ENCODE measurements at regions of chr6 and their contacts with region 1.

Region 1: DNA sequence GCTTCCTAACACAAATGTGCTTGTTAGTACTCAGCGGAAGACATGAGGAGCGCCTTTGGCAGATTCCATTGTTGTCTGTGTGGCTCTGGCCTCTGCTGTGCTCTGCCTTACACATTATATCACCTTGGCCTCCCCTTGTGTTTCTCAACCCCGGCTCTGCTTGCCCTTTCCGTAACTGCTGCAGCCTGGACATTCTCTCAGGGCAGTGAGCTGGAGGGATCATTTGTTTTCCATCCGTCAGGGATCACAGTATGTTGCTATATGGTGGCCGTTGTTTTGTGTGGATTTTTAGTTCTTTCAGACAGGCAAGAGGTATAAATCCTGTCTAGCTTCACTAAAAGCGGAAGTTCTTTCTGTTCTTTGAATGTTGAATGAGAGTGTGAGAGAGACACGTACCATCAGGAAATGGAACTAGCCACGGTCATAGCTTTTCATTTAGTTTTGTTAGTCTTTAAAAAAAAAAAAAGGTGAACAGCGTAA is 175.1 kb downstream of the JARID2 start:
- DNase-seq: no peak
- ATAC-seq: peak; percentile 61
- H3K4me3 Mint-ChIP-seq: peak overlapping the region; percentile 37
- H3K27ac Mint-ChIP-seq: peak overlapping the region; percentile 90
- H3K4me1 Mint-ChIP-seq: peaks cover 56% of the 10 kb centered on the region
- H3K27me3 Mint-ChIP-seq: no peaks in the 10 kb centered on the region

Region 2: DNA sequence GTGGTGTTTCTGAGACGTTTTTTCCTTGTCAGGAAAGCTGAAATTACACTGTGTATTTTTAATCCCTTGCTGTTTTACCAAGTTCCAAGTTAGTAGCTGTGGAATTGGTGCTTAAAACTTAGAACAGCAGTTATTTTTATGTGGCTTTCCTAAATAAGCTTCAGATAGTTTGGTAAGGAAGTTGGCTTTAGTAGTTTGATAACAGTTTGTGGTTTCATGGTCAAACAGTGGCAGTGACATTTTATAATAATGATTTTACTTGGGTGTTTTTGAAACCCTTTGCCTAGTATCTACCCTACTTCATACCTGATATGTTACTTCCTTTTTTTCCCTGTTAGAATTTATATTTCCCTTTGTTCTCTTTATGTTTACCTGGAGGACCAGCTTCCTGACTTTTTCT is 10.2 kb before region 1 on chr6:
- CTCF ChIA-PET with region 1: interaction called, 16 read pairs
- DNase-seq: no peak
- ATAC-seq: no peak
- H3K4me3 Mint-ChIP-seq: peak overlapping the region; percentile 30
- H3K27ac Mint-ChIP-seq: peak overlapping the region; percentile 90
- H3K4me1 Mint-ChIP-seq: peaks cover 58% of the 10 kb centered on the region
- H3K27me3 Mint-ChIP-seq: no peaks in the 10 kb centered on the region

Region 3: GRCh38 chr6:15431762-15432483 is 10.9 kb after region 1 on chr6:
- CTCF ChIA-PET with region 1: interaction called, 21 read pairs
- DNase-seq: no peak
- ATAC-seq: no peak
- H3K4me3 Mint-ChIP-seq: no peak overlapping the region
- H3K27ac Mint-ChIP-seq: peak overlapping the region; percentile 53
- H3K4me1 Mint-ChIP-seq: peaks cover 76% of the 10 kb centered on the region
- H3K27me3 Mint-ChIP-seq: no peaks in the 10 kb centered on the region

Region 4: DNA sequence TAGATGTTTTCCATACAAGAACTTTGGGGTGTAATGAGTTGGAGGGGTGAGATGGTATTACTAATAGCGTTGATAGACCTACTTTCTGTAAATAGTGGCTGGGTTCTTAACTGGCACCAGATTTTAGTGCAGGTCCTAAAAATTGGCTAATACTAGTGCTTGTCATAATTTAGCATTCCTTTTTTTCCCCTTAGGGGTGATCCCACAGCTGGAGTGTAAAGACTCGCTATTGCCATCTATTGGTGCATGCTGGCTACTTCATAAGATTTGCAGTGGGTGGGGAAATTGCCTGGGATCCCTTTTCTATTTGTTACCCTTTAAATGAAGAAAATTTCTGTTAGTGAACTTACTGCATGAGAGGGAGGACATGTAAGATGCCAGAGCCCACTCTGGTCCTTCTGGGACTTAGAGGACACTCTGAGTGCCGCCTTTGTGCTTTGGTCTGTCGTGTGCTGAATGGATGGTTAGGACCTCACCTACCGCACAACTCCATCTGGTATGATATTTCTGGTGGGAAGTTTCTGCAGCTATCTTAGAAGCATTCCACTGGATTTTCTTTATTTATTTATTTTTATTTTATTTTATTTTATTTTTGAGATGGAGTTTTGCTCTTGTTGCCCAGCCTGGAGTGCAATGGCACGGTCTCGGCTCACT is 20.3 kb after region 1 on chr6:
- CTCF ChIA-PET with region 1: interaction called, 14 read pairs
- DNase-seq: no peak
- ATAC-seq: peak; percentile 37
- H3K4me3 Mint-ChIP-seq: no peak overlapping the region
- H3K27ac Mint-ChIP-seq: peak overlapping the region; percentile 31
- H3K4me1 Mint-ChIP-seq: peaks cover 76% of the 10 kb centered on the region
- H3K27me3 Mint-ChIP-seq: no peaks in the 10 kb centered on the region

Region 5: GRCh38 chr6:15464211-15464725 is 43.3 kb after region 1 on chr6:
- CTCF ChIA-PET with region 1: no interaction called
- DNase-seq: peak; percentile 73
- ATAC-seq: peak; percentile 73
- H3K4me3 Mint-ChIP-seq: no peak overlapping the region
- H3K27ac Mint-ChIP-seq: no peak overlapping the region
- H3K4me1 Mint-ChIP-seq: peaks cover 16% of the 10 kb centered on the region
- H3K27me3 Mint-ChIP-seq: no peaks in the 10 kb centered on the region

Region 6: DNA sequence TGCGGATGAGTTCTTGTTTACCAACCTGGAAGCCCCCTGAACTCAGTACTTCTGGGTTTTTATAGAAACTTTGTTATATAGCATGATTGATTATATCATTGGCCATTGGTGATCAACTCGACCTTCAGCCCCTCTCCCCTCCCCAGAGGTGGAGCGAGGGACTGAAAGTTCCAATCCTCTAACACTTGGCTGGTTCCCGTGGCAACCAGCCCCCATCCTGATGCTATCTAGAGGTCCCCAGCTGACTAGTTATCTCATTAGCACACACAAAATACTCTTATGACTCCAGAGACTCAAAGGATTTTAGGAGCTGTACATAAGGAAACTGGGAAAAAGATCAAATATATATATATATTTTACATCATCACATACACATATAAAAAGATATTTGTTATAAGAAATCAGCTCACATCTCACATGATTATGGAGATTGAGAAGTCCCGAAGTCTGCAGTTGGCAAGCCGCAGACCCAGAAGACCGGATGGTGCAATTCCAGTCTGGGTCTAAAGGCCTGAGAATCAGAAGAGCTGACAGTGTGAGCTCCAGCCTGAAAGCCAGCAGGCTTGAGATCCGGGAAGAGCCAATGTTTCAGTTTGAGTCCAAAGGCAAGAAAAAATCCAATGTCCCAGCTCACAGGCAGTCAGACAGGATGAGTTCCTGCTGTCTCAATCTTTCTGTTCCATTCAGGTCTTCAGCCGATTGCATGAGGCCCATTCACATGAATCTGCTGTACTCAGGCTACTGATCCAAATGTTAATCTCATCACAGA is 421.1 kb after region 1 on chr6:
- CTCF ChIA-PET with region 1: no interaction called
- DNase-seq: no peak
- ATAC-seq: no peak
- H3K4me3 Mint-ChIP-seq: no peak overlapping the region
- H3K27ac Mint-ChIP-seq: no peak overlapping the region
- H3K4me1 Mint-ChIP-seq: no peaks in the 10 kb centered on the region
- H3K27me3 Mint-ChIP-seq: peaks cover 2% of the 10 kb centered on the region

Measured in activated CD8-positive, alpha-beta memory T cell treated with anti-CD3 and anti-CD28 coated beads, Interleukin-2, amount 10 ng/mL, durations not matched to agents 7 days and 5 days (primary cell).